ENCODE measurements at regions of chr9 and their contacts with region 1.

Region 1: DNA sequence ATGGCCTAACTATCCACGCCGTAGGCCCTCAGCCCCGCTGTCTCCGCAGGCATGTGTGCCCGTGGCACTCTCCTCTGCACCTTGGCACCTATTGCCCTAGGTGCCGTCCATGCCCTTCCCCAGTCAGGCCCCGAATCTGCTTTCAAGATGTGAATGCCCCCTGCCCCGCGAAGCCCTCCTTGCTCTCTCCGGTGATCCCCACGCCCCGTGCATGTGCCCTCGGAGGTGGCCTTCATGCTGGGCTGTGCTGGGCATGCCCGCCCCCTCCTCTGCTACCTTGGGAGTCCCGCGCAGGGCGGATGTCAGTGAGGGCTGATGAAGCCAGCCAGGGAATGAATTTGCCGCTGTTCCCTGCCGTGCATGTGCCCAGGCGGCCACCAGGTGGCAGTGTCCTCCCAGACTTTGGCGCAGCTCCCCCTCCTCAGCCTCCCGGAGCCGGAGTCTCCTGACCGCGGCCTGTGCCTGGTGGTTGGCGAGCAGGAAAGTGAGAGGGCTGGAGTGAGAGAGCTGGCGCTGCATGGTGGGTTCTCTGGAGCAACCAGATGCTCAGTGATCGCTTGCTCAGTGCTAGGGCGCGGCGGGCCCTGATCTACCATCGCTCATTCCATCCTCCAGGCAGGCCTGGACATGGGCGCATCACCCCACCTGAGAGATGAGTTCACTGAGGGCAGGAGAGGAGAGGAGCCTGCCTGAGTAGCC is 112.9 kb upstream of the LMX1B start:
- DNase-seq: peak; percentile 76
- H3K4me3 ChIP-seq: no peak overlapping the region
- H3K27ac ChIP-seq: no peak overlapping the region
- H3K4me1 ChIP-seq: peaks cover 30% of the 10 kb centered on the region
- H3K27me3 ChIP-seq: peaks cover 8% of the 10 kb centered on the region
- CTCF ChIP-seq: peak; percentile 97

Region 2: DNA sequence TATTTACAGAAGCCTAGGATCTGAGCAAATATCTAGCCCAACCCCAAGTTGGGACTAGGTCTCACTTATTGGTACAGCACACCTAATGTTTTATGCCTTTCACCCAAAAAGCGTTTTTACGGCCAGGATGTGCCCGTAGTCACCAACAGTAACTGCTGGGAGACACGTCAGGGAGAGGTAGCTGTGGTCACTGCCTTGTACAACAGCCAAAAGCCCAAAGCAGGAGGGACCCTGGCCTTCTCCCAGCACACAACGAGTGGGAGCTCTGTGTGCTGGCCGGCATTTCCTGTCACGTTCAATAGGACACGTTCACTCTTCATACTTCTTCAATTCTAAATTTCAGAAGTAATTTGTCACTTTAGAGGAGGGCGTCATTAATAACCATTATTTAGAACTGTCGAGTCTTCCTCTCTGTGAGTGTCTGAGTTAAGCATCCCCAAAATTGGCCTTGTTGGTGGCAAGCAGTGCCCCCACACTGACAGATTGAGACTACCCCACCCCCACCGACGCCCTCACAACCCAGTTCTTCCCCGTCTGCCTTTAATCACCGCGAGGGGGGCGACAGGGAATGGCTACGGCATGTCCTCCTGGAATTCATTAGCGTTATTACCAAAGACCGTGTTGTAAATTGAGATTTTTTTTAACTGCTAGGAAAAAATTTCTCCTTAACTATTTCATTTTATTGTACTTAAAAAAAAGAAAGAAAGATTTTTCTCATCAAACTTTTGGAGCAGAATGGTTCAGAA is 93.5 kb before region 1 on chr9:
- intact Hi-C with region 1: no loop called
- DNase-seq: no peak
- H3K4me3 ChIP-seq: no peak overlapping the region
- H3K27ac ChIP-seq: no peak overlapping the region
- H3K4me1 ChIP-seq: peaks cover 25% of the 10 kb centered on the region
- H3K27me3 ChIP-seq: no peaks in the 10 kb centered on the region
- CTCF ChIP-seq: no peak

Region 3: GRCh38 chr9:126546036-126546435 is 45.2 kb after region 1 on chr9:
- intact Hi-C with region 1: no loop called
- DNase-seq: no peak
- H3K4me3 ChIP-seq: no peak overlapping the region
- H3K27ac ChIP-seq: no peak overlapping the region
- H3K4me1 ChIP-seq: peaks cover 6% of the 10 kb centered on the region
- H3K27me3 ChIP-seq: no peaks in the 10 kb centered on the region
- CTCF ChIP-seq: no peak

Region 4: GRCh38 chr9:126558051-126558665 is 57.3 kb after region 1 on chr9:
- intact Hi-C with region 1: loop called (anchors 5 kb)
- DNase-seq: peak; percentile 46
- H3K4me3 ChIP-seq: no peak overlapping the region
- H3K27ac ChIP-seq: no peak overlapping the region
- H3K4me1 ChIP-seq: no peaks in the 10 kb centered on the region
- H3K27me3 ChIP-seq: peaks cover 35% of the 10 kb centered on the region
- CTCF ChIP-seq: peak; percentile 89

Region 5: GRCh38 chr9:126902210-126902609 is 401.4 kb after region 1 on chr9:
- intact Hi-C with region 1: no loop called
- DNase-seq: no peak
- H3K4me3 ChIP-seq: no peak overlapping the region
- H3K27ac ChIP-seq: no peak overlapping the region
- H3K4me1 ChIP-seq: no peaks in the 10 kb centered on the region
- H3K27me3 ChIP-seq: peaks cover 27% of the 10 kb centered on the region
- CTCF ChIP-seq: no peak

Region 6: GRCh38 chr9:127423934-127424675 is 923.3 kb after region 1 on chr9 and contains the start of gene ZNF79:
- intact Hi-C with region 1: no loop called
- DNase-seq: peak; percentile 95
- H3K4me3 ChIP-seq: peak within 1 kb of the TSS; percentile 91
- H3K27ac ChIP-seq: peak within 1 kb of the TSS; percentile 94
- H3K4me1 ChIP-seq: peaks cover 58% of the 10 kb centered on the region
- H3K27me3 ChIP-seq: no peaks in the 10 kb centered on the region
- CTCF ChIP-seq: peak; percentile 20
- total RNA-seq, gene ZNF79: 6.2 TPM

Measured in left ventricle myocardium inferior (tissue), 1 donor.